CD4-positive, alpha-beta memory T cell (primary cell): ENCODE measurements at regions of chr22 and their contacts with region 1.

Region 1: GRCh38 chr22:19447388-19448075 is at the start of gene C22orf39:
- DNase-seq: peak; percentile 91 to 96 (median 91)
- H3K4me3 ChIP-seq: peak within 1 kb of the TSS; percentile 63 to 65
- H3K4me3 Mint-ChIP-seq: peak within 1 kb of the TSS; percentile 91 to 98 (median 95)
- H3K27ac ChIP-seq: peak within 1 kb of the TSS; percentile 91
- H3K27ac Mint-ChIP-seq: peak within 1 kb of the TSS; percentile 82 to 99 (median 99)
- H3K4me1 ChIP-seq: peaks cover 37% of the 10 kb centered on the region
- H3K4me1 Mint-ChIP-seq: peaks cover 29 to 59% (median 44%) of the 10 kb centered on the region in 4 donors
- H3K27me3 ChIP-seq: no peaks in the 10 kb centered on the region
- H3K27me3 Mint-ChIP-seq: no peaks in the 10 kb centered on the region
- total RNA-seq, gene C22orf39: 40.5 TPM

Region 2: DNA sequence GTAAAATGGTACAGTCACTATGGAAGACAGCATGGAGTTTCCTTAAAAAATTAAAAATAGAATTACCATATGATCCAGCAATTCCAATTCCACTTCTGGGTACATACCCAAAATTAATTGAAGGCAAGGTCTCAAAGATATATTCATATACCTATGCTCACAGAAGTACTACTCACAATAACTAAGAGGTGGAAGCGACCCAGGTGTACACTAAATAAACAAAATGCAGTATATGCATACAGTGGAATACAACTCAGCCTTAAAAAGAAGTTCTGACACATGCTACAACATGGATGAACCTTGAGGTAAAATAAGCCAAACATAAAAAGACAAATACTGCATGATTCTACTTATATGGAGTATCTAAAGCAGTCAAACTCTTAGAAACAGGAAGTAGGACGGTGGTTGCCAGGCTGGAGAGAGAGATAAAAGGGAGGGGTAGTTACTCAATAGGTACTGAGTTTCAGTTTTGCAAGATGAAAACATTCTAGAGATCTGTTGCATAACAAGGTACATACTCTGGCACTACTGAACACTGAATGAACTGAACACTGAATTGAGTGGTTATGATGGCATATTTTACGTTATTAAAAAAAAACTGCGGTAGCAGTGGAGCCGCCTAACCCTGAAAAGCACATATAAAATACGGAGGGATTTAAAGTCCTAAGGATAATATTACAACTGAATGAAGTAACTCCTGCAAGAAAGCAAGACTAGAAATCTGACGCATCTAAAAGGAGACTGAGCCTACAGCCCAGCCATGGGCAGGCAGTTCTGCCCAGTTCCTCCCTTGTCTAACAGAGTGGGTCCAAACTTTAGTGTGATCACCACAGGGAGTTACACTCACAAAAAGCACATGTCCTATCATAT is 338.1 kb before region 1 on chr22:
- CTCF ChIA-PET with region 1: no interaction called
- POLR2A ChIA-PET with region 1: interaction called, 11 read pairs
- intact Hi-C with region 1: no loop called
- DNase-seq: peak; percentile 75 to 86 (median 82)
- H3K4me3 ChIP-seq: peak overlapping the region; percentile 26 to 29
- H3K4me3 Mint-ChIP-seq: peak overlapping the region; percentile 77 to 89 (median 84)
- H3K27ac ChIP-seq: peak overlapping the region; percentile 80
- H3K27ac Mint-ChIP-seq: peak overlapping the region; percentile 79 to 99 (median 97)
- H3K4me1 ChIP-seq: peaks cover 66% of the 10 kb centered on the region
- H3K4me1 Mint-ChIP-seq: peaks cover 51 to 76% (median 62%) of the 10 kb centered on the region in 4 donors
- H3K27me3 ChIP-seq: no peaks in the 10 kb centered on the region
- H3K27me3 Mint-ChIP-seq: no peaks in the 10 kb centered on the region

Region 3: GRCh38 chr22:19419464-19420178 is 27.9 kb before region 1 on chr22:
- CTCF ChIA-PET with region 1: no interaction called
- POLR2A ChIA-PET with region 1: interaction called, 13 read pairs
- intact Hi-C with region 1: no loop called
- DNase-seq: peak; percentile 56 to 74 (median 63)
- H3K4me3 ChIP-seq: no peak overlapping the region
- H3K4me3 Mint-ChIP-seq: peak overlapping the region; percentile 34 to 74 (median 58)
- H3K27ac ChIP-seq: peak overlapping the region; percentile 60
- H3K27ac Mint-ChIP-seq: peak overlapping the region; percentile 76 to 94 (median 92)
- H3K4me1 ChIP-seq: peaks cover 59% of the 10 kb centered on the region
- H3K4me1 Mint-ChIP-seq: peaks cover 53 to 78% (median 64%) of the 10 kb centered on the region in 4 donors
- H3K27me3 ChIP-seq: no peaks in the 10 kb centered on the region
- H3K27me3 Mint-ChIP-seq: no peaks in the 10 kb centered on the region

Region 4: GRCh38 chr22:19432133-19432851 is 15.2 kb before region 1 on chr22 and contains the start of gene MRPL40:
- CTCF ChIA-PET with region 1: interaction called, 7 read pairs
- POLR2A ChIA-PET with region 1: interaction called, 112 read pairs
- intact Hi-C with region 1: loop called (anchors 1 kb)
- DNase-seq: peak; percentile 80 to 88 (median 82)
- H3K4me3 ChIP-seq: peak within 1 kb of the TSS; percentile 88 to 97
- H3K4me3 Mint-ChIP-seq: peak within 1 kb of the TSS; percentile 87 to 97 (median 90)
- H3K27ac ChIP-seq: peak within 1 kb of the TSS; percentile 81
- H3K27ac Mint-ChIP-seq: peak within 1 kb of the TSS; percentile 90 to 96 (median 92)
- H3K4me1 ChIP-seq: peaks cover 43% of the 10 kb centered on the region
- H3K4me1 Mint-ChIP-seq: peaks cover 23 to 48% (median 34%) of the 10 kb centered on the region in 4 donors
- H3K27me3 ChIP-seq: no peaks in the 10 kb centered on the region
- H3K27me3 Mint-ChIP-seq: no peaks in the 10 kb centered on the region
- total RNA-seq, gene MRPL40: 16.2 to 16.8 TPM